T-cell (primary cell): ENCODE measurements at regions of chr10 and their contacts with region 1.

Region 1: DNA sequence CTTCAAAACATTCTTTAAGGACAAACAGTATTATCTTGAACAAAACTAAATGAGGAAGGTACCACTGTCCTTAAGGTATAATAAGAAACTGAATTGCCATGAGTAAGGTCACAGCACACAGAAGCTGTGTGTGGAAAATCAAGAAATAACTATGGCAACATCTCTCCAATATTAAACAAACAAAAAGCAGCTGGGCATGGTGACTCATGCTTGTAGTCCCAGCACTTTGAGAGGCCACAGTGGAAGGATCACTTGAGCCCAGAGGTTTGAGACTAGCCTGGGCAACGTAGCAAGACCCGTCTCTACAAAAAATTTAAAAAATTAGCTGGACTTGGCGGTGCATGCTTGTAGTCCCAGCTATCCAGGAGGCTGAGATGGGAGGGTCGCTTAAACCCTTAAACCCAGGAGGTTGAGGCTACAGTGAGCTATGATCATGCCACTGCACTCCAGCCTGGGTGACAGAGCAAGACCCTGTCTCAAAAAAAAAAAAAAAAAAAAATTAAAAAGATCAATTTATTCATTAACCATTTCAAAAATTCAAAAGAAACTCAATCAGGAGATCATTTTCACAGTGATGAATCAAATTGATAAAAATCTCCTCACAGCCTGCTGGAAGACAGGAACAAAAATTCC is 195.4 kb downstream of the SKIDA1 start:
- DNase-seq: no peak
- ATAC-seq: no peak
- H3K4me3 ChIP-seq: no peak overlapping the region
- H3K4me3 Mint-ChIP-seq: no peak overlapping the region
- H3K27ac ChIP-seq: no peak overlapping the region
- H3K27ac Mint-ChIP-seq: no peak overlapping the region
- H3K4me1 ChIP-seq: no peaks in the 10 kb centered on the region
- H3K4me1 Mint-ChIP-seq: no peaks in the 10 kb centered on the region
- H3K27me3 ChIP-seq: peaks cover 0 to 3% of the 10 kb centered on the region in 2 experiments
- H3K27me3 Mint-ChIP-seq: peaks cover 1 to 11% of the 10 kb centered on the region in 2 donors

Region 2: DNA sequence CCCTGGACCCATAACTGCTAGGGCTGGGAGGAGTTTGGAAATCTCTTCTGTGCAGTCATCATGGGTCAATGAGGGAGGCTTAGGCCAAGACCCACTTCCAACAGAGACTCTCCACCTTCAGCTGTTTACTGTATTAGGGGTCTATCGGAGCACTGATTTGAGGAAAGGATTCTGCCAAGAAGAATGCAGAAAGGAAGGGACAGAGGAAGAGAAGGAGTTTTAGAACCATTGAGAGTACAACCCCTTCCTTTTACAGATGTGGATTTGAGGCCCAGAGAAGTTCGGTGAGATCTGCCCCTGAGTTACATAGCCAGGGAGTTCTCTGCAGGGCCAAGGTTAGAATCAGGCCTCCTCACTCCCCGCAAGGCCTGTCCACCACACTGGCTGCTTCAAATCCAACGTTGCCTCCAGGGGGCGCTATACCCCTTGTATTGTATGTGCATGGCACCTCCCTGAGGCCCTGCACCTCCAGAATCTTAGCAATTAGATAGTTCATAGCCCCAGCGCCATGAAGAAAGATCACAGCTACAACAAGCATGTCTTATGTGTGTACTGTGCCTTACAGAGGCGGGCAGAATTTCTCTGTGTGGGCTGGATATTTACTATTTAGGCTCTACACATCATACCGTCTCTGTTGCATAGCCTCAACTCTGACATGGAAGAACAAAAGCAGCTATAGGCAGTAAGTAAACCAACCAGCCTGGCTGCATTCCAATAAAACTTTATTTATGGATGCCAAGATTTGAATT is 51.4 kb before region 1 on chr10:
- CTCF ChIA-PET with region 1: no interaction called
- POLR2A ChIA-PET with region 1: no interaction called
- DNase-seq: peak in 34 of 35 experiments; percentile 4 to 68 (median 40)
- ATAC-seq: peak in 2 of 4 experiments; percentile 34 to 61
- H3K4me3 ChIP-seq: no peak overlapping the region
- H3K4me3 Mint-ChIP-seq: no peak overlapping the region
- H3K27ac ChIP-seq: no peak overlapping the region
- H3K27ac Mint-ChIP-seq: no peak overlapping the region
- H3K4me1 ChIP-seq: no peaks in the 10 kb centered on the region
- H3K4me1 Mint-ChIP-seq: peaks cover 0 to 7% (median 0%) of the 10 kb centered on the region in 3 donors
- H3K27me3 ChIP-seq: peaks cover 0 to 8% of the 10 kb centered on the region in 2 experiments
- H3K27me3 Mint-ChIP-seq: peaks cover 7 to 12% of the 10 kb centered on the region in 2 donors

Region 3: GRCh38 chr10:21315645-21316281 is 14.3 kb before region 1 on chr10:
- CTCF ChIA-PET with region 1: no interaction called
- POLR2A ChIA-PET with region 1: no interaction called
- DNase-seq: no peak
- ATAC-seq: no peak
- H3K4me3 ChIP-seq: no peak overlapping the region
- H3K4me3 Mint-ChIP-seq: no peak overlapping the region
- H3K27ac ChIP-seq: no peak overlapping the region
- H3K27ac Mint-ChIP-seq: no peak overlapping the region
- H3K4me1 ChIP-seq: no peaks in the 10 kb centered on the region
- H3K4me1 Mint-ChIP-seq: no peaks in the 10 kb centered on the region
- H3K27me3 ChIP-seq: peaks cover 0 to 8% of the 10 kb centered on the region in 2 experiments
- H3K27me3 Mint-ChIP-seq: peaks cover 0 to 5% of the 10 kb centered on the region in 2 donors

Region 4: GRCh38 chr10:22067099-22067498 is 737.0 kb after region 1 on chr10:
- CTCF ChIA-PET with region 1: no interaction called
- POLR2A ChIA-PET with region 1: interaction called in 1 of 2 experiments, 11 read pairs
- DNase-seq: no peak
- ATAC-seq: no peak
- H3K4me3 ChIP-seq: no peak overlapping the region
- H3K4me3 Mint-ChIP-seq: no peak overlapping the region
- H3K27ac ChIP-seq: no peak overlapping the region
- H3K27ac Mint-ChIP-seq: no peak overlapping the region
- H3K4me1 ChIP-seq: no peaks in the 10 kb centered on the region
- H3K4me1 Mint-ChIP-seq: no peaks in the 10 kb centered on the region
- H3K27me3 ChIP-seq: peaks cover 0 to 2% of the 10 kb centered on the region in 2 experiments
- H3K27me3 Mint-ChIP-seq: peaks cover 4 to 7% of the 10 kb centered on the region in 2 donors